H1 (cell line): ENCODE measurements at regions of chr1 and their contacts with region 1.

Region 1: GRCh38 chr1:54973205-54973921 is 7.1 kb upstream of the TMEM61 start:
- DNase-seq: no peak
- H3K4me3 ChIP-seq: no peak overlapping the region
- H3K27ac ChIP-seq: no peak overlapping the region
- H3K4me1 ChIP-seq: peaks cover 0 to 4% (median under 1%) of the 10 kb centered on the region in 4 experiments; a peak in 4 of 7 replicates
- H3K27me3 ChIP-seq: no peaks in the 10 kb centered on the region
- CTCF ChIP-seq: peak; percentile 18 to 63 (median 50)
- EP300 ChIP-seq: no peak
- POLR2A ChIP-seq: no peak
- RAD21 ChIP-seq: peak; percentile 45 to 53; a peak in 3 of 4 replicates

Region 2: DNA sequence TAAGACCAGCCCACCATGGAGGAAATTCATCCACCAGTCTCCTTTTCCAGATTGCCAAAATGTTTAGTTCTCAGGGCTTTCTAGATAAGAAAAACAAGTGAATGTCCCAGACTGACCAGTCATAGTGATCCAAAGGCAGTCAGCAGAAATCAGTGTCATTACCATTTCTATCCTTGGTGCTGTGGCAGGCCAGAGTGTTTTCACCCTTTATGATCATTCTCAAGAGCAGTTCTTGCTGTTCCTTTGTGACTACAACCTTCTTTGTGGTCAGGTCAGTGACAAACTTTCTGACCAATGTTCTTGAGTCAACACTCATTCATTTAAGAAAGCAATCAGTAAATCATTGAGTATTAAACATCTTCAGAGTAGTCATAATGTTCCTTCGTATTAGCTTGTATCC is 79.1 kb before region 1 on chr1:
- CTCF ChIA-PET with region 1: no interaction called
- POLR2A ChIA-PET with region 1: no interaction called
- DNase-seq: no peak
- H3K4me3 ChIP-seq: no peak overlapping the region
- H3K27ac ChIP-seq: no peak overlapping the region
- H3K4me1 ChIP-seq: no peaks in the 10 kb centered on the region
- H3K27me3 ChIP-seq: no peaks in the 10 kb centered on the region; a peak in 1 of 7 replicates
- CTCF ChIP-seq: no peak
- EP300 ChIP-seq: no peak
- POLR2A ChIP-seq: no peak
- RAD21 ChIP-seq: no peak

Region 3: GRCh38 chr1:54959241-54959640 is 14.1 kb before region 1 on chr1:
- CTCF ChIA-PET with region 1: interaction called, 436 read pairs
- POLR2A ChIA-PET with region 1: interaction called, 7 read pairs
- DNase-seq: no peak
- H3K4me3 ChIP-seq: no peak overlapping the region
- H3K27ac ChIP-seq: no peak overlapping the region
- H3K4me1 ChIP-seq: peaks cover 0 to 14% (median 6%) of the 10 kb centered on the region in 4 experiments; a peak in 2 of 7 replicates
- H3K27me3 ChIP-seq: no peaks in the 10 kb centered on the region
- CTCF ChIP-seq: no peak
- EP300 ChIP-seq: no peak
- POLR2A ChIP-seq: no peak
- RAD21 ChIP-seq: no peak

Region 4: GRCh38 chr1:54987919-54988705 is 14.7 kb after region 1 on chr1:
- CTCF ChIA-PET with region 1: interaction called, 29 read pairs
- POLR2A ChIA-PET with region 1: interaction called, 3 read pairs
- DNase-seq: no peak
- H3K4me3 ChIP-seq: no peak overlapping the region
- H3K27ac ChIP-seq: no peak overlapping the region
- H3K4me1 ChIP-seq: peaks cover 0 to 4% (median 3%) of the 10 kb centered on the region in 4 experiments; a peak in 3 of 7 replicates
- H3K27me3 ChIP-seq: no peaks in the 10 kb centered on the region; a peak in 1 of 7 replicates
- CTCF ChIP-seq: no peak
- EP300 ChIP-seq: no peak
- POLR2A ChIP-seq: no peak
- RAD21 ChIP-seq: no peak